Activated CD4-positive, alpha-beta memory T cell treated with anti-CD3 and anti-CD28 coated beads for 36 hours (primary cell): ENCODE measurements at regions of chr2 and their contacts with region 1.

Region 1: DNA sequence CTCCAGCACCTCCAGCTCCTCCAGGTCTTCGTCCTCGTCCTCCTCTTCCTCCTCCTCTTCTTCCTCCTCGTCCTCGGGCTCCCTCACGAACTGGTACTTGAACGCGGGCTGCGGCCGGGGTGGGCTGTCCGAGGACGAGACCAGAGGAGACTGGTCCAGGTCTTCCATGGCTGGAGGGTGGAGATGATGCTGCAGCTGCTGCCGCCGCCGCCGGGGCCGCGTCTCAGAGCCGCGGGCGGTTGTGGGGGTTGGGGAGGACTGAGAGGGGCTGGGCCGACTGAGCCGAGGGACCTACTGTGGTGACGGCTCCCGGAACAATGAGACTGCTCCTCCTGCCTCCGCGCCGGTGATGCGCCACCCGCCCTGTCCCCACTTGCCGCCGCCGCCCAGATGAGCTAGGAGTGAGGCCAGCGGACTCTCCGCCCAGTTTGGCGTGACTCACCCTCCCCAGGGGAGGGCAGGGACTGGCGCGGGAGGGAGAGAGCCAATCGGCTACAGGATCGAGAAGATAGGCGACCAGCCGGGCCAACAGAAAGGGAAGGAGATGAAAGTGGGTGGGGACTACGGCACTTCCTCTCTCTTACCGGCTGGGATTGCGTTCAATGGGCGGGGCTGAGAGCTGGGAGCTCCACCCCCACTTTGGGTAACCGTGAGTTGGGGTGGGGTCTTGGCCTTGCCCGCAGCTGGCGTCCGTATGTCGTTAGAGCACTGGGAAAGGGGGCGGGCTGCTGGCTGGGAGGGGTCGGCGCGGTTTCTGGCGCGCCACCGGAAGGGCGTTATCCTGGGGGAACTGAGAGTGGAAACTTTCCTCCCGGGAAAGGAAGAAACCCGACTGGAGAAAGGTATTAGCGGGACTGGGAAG is at the start of gene RTN4:
- DNase-seq: peak; percentile 99
- H3K4me3 Mint-ChIP-seq: peak within 1 kb of the TSS; percentile 96
- H3K27ac Mint-ChIP-seq: peak within 1 kb of the TSS; percentile 98
- H3K4me1 Mint-ChIP-seq: peaks cover 58% of the 10 kb centered on the region
- H3K27me3 Mint-ChIP-seq: no peaks in the 10 kb centered on the region
- total RNA-seq, gene RTN4: 96.7 to 97.5 TPM

Region 2: GRCh38 chr2:54570925-54571694 is 479.3 kb before region 1 on chr2:
- CTCF ChIA-PET with region 1: interaction called, 4 read pairs
- POLR2A ChIA-PET with region 1: no interaction called
- intact Hi-C with region 1: loop called (anchors 5 kb)
- DNase-seq: peak; percentile 93
- H3K4me3 Mint-ChIP-seq: peak overlapping the region; percentile 36
- H3K27ac Mint-ChIP-seq: peak overlapping the region; percentile 96
- H3K4me1 Mint-ChIP-seq: peaks cover 85% of the 10 kb centered on the region
- H3K27me3 Mint-ChIP-seq: no peaks in the 10 kb centered on the region

Region 3: DNA sequence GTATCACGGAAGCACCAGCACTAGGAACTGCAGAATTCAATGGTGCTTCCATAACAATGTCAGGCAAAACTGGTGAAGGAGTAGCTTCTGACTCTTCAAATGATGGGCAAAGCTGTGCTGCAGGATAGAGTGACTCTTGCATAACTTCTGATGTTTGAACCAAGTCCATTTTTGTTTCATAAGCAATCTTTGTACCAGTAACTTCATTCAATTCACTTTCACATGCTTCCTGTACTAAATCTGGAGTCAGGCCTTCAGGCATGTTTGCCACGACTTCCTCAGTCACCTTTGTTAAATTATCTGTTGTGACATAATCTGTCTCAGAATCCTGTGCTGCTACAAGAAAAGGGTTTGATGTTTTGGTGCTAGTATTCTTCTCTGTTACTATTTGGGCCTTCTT is 24.2 kb before region 1 on chr2:
- CTCF ChIA-PET with region 1: interaction called, 24 read pairs
- POLR2A ChIA-PET with region 1: interaction called, 15 read pairs
- intact Hi-C with region 1: loop called (anchors 1 kb)
- DNase-seq: no peak
- H3K4me3 Mint-ChIP-seq: no peak overlapping the region
- H3K27ac Mint-ChIP-seq: peak overlapping the region; percentile 55
- H3K4me1 Mint-ChIP-seq: peaks cover 15% of the 10 kb centered on the region
- H3K27me3 Mint-ChIP-seq: no peaks in the 10 kb centered on the region

Region 4: DNA sequence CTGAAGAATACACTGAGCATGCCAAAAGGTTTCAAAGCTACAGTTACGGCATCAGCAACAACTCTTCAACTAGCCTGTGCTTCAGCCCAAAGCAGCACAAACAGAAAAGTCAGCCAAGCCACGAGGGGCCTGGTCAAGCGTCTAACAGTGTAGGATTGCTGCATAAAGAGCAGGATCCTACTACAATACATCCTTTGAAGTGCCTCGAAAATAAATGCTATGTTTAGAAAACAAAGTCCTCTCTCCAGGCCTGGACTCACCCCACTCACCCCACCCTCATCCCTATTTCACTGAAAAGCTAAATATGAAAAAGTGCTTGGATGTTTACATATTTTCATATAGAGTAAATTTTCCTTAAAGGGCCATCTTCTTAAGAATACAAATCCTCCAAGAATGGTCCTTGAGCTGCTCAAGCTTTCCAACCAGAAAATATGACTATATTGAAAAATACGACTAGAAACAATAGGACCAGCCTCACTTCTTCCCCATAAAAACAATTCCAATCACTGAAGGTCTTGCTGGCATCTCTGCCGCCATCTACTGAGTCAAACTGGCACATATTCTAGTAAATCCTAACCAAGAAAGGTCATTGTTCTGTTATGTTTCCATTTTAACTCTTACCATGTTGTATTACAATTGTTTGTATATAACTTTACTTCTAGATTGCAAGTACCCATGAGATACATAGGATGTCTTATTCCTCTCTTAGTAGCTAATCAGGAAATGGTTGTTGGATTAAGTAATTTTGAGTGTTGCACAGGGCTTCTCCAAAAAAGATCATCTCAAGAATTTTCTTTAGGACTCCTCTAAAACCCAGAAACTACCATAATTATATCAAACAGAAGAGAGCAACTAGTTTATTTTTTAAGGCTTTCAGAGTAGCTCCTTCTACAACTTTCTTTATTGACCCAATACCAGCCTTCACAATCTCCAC is 118.1 kb after region 1 on chr2:
- CTCF ChIA-PET with region 1: interaction called, 8 read pairs
- POLR2A ChIA-PET with region 1: no interaction called
- intact Hi-C with region 1: loop called (anchors 1 kb)
- DNase-seq: peak; percentile 45
- H3K4me3 Mint-ChIP-seq: no peak overlapping the region
- H3K27ac Mint-ChIP-seq: no peak overlapping the region
- H3K4me1 Mint-ChIP-seq: peaks cover 3% of the 10 kb centered on the region
- H3K27me3 Mint-ChIP-seq: no peaks in the 10 kb centered on the region

Region 5: GRCh38 chr2:55419679-55420438 is 369.5 kb after region 1 on chr2 and contains the start of gene CCDC88A:
- CTCF ChIA-PET with region 1: interaction called, 3 read pairs
- POLR2A ChIA-PET with region 1: no interaction called
- intact Hi-C with region 1: loop called (anchors 2 kb)
- DNase-seq: peak; percentile 92
- H3K4me3 Mint-ChIP-seq: peak within 1 kb of the TSS; percentile 81
- H3K27ac Mint-ChIP-seq: peak within 1 kb of the TSS; percentile 69
- H3K4me1 Mint-ChIP-seq: peaks cover 23% of the 10 kb centered on the region
- H3K27me3 Mint-ChIP-seq: peaks cover 4% of the 10 kb centered on the region
- total RNA-seq, gene CCDC88A: 13.2 to 14.1 TPM